PC-3 (cell line): ENCODE measurements at regions of chr21 and their contacts with region 1.

Region 1: DNA sequence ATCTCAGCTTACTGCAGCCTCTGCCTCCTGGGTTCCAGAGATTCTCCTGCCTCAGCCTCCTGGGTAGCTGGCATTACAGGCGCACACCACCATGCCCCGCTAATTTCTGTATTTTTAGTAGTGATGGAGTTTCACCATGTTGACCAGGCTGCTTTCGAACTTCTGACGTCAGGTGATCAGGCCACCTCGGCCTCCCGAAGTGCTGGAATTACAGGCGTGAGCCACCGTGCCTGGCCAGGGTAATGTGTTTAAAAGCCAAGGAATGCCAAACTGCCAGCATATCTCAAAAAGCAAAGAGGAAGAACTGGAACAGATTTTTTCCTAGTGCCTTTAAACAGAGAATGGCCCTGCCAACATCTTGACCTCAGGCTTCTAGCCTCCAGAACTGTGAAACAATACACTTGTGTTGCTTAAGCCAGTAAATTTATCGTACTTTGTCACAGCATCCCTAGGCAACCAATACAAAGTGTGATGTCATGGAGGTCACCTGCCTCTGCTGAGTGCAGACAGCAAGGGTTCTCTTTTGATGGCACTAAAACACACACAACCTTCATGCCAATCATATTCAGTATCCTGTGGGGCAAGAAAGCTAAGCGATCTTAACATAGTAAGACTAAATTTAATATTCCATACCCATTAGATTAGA is 858.3 kb upstream of the TMPRSS15 start:
- DNase-seq: no peak
- ATAC-seq: no peak
- H3K4me3 ChIP-seq: no peak overlapping the region
- H3K27ac ChIP-seq: no peak overlapping the region
- H3K4me1 ChIP-seq: no peaks in the 10 kb centered on the region
- H3K27me3 ChIP-seq: no peaks in the 10 kb centered on the region
- CTCF ChIP-seq: no peak

Region 2: GRCh38 chr21:18285379-18285778 is 976.5 kb before region 1 on chr21:
- CTCF ChIA-PET with region 1: no interaction called
- POLR2A ChIA-PET with region 1: no interaction called
- intact Hi-C with region 1: no loop called
- DNase-seq: no peak
- ATAC-seq: no peak
- H3K4me3 ChIP-seq: no peak overlapping the region
- H3K27ac ChIP-seq: no peak overlapping the region
- H3K4me1 ChIP-seq: no peaks in the 10 kb centered on the region
- H3K27me3 ChIP-seq: peaks cover 22% of the 10 kb centered on the region; the same call in 1 of the 2 replicates
- CTCF ChIP-seq: no peak

Region 3: DNA sequence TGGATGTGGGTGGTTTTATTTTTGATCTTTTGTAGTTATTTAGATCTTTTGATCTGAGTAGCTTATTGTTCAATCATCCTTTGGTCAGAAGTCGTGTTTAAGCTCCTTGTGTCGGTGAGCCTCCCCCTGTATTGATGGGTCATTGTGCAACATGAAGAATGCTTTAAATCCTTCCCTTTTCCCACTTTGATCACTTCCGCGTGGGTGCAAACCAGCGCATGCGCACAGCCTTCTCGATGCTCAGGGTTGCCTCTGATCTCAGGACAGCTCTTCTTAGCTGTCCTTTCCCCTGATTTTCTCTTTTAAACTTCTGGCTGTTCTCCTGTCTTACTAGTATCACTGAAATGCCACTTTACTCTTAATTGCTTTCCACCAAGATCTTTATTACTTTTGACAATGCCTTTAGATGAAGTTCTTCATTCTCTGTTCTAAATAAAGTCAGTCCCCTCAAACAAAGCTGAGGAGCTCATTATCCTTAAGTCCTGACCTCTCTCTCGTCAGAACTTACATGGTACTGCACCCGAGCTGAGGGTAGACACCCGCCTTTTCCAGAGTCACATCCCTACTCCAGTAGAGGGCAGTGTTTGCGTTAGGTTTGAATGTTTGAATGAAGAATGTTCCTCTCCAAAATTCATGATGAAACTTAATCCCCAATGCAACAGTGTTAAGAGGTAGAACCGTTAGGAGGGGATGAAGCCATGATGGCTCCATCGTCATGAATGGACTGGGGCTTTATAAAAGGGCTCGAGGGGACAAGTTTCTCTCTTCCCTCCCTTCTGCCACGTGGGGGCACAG is 310.4 kb before region 1 on chr21:
- CTCF ChIA-PET with region 1: interaction called, 12 read pairs
- POLR2A ChIA-PET with region 1: no interaction called
- intact Hi-C with region 1: no loop called
- DNase-seq: peak; percentile 78
- ATAC-seq: peak; percentile 72
- H3K4me3 ChIP-seq: no peak overlapping the region
- H3K27ac ChIP-seq: no peak overlapping the region
- H3K4me1 ChIP-seq: no peaks in the 10 kb centered on the region
- H3K27me3 ChIP-seq: no peaks in the 10 kb centered on the region
- CTCF ChIP-seq: peak; percentile 85